ENCODE measurements at regions of chr6 and their contacts with region 1.

Region 1: DNA sequence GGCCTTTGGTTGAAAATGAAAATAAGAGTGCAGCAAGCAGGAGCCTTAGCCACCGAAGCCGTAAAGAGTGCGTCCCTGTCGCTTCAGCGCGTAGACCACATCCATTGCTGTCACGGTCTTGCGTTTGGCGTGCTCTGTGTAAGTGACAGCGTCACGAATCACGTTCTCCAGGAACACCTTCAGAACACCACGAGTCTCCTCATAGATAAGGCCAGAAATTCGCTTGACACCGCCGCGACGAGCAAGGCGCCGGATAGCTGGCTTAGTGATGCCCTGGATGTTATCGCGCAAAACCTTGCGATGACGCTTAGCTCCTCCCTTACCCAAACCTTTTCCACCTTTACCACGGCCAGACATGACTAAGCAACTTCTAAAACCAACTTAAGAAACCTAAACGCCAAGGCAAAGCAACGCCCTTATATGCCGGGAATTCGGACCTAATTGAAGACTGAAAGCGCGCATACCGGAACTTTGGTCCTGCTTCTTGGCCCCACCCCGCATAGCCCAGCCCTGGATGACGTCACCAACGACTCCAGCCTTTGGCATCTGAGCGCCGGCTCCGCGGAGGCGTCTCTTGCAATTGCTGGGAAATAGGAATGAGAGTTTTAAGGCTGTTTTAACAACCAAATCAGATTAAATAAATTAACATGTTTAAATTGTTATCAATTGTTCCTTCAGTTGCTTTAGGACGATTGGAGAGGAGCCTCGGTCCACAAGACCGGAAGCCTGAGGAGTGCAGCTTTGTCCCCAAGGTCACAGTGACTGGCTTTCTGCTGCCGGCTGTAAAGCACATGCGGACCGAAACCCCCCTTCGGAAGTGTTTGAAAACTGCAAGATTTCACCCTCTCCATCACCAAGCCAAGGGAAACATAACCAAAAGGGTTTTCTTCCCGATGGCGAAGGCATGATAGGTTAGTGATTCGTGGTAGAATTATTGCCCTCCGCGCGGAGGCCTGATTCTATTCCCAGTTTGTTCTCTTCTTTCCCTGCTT is 79.6 kb upstream of the BTN3A2 start:
- DNase-seq: peak; percentile 94 to 100
- H3K4me3 ChIP-seq: peak overlapping the region; percentile 74 to 95 (median 80)
- H3K27ac ChIP-seq: peak overlapping the region; percentile 96
- H3K4me1 ChIP-seq: peaks cover 0 to 7% (median 2%) of the 10 kb centered on the region in 4 experiments; a peak in 1 of 7 replicates
- H3K27me3 ChIP-seq: no peaks in the 10 kb centered on the region
- CTCF ChIP-seq: no peak
- EP300 ChIP-seq: peak in 1 of 2 experiments; percentile 97; a peak in 2 of 3 replicates
- POLR2A ChIP-seq: peak; percentile 100
- RAD21 ChIP-seq: no peak

Region 2: DNA sequence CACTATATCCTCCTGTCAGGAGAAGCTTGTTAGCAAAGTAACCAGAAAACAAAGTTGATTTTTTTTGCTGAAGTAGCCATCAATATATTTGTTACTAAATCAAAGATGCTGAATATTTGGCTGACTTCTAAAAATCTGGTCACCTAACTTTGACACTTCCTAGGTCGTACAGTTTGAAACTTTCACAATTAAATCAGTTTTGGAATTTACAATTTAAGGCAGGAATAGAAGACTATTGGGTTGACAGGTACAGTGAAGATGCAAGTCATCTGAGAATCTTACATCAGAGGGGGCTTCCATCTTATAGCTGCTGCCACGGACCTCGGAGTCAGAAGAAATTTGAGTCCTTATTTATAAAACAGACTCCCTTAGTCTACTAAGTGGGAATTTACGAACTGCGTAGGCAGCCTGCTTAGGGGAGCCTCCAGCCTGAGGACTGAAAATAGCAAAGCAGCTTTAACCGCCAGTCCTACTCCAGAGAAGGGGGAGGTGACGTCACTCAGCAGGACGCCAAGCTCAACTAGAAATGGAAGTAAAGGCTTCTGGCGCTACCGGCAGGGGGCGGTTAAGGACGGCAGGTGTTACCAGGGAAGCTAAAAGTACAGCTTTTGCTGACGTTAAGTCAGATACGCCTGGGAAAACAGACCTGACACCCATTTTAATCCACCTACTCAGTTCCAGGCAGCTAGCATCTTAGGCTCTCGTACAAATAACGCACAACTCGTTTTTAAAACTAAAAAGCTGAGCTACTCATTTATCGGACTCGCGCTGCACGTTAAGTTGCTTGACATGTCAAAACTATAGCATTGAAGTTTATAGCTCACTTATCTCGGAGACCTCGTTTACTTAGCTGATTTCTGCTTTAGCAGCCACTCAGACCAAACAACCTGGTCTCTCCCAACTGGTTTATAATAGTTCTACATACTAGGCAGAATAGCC is 259.3 kb before region 1 on chr6:
- CTCF ChIA-PET with region 1: no interaction called
- POLR2A ChIA-PET with region 1: interaction called, 19 read pairs
- DNase-seq: peak; percentile 90 to 93
- H3K4me3 ChIP-seq: peak overlapping the region; percentile 75 to 89 (median 82)
- H3K27ac ChIP-seq: peak overlapping the region; percentile 80
- H3K4me1 ChIP-seq: peaks cover 3 to 26% (median 10%) of the 10 kb centered on the region in 4 experiments; a peak in 5 of 7 replicates
- H3K27me3 ChIP-seq: no peaks in the 10 kb centered on the region
- CTCF ChIP-seq: peak; percentile 63 to 93 (median 77)
- EP300 ChIP-seq: peak in 1 of 2 experiments; percentile 43; a peak in 1 of 3 replicates
- POLR2A ChIP-seq: peak; percentile 85 to 91; a peak in 2 of 3 replicates
- RAD21 ChIP-seq: peak; percentile 45 to 47

Region 3: GRCh38 chr6:26196846-26197648 is 88.4 kb before region 1 on chr6:
- CTCF ChIA-PET with region 1: interaction called, 4 read pairs
- POLR2A ChIA-PET with region 1: interaction called, 197 read pairs
- DNase-seq: peak in 1 of 2 experiments; percentile 76
- H3K4me3 ChIP-seq: peak overlapping the region; percentile 85 to 98 (median 89)
- H3K27ac ChIP-seq: peak overlapping the region; percentile 82
- H3K4me1 ChIP-seq: peaks cover 0 to 1% (median 0%) of the 10 kb centered on the region in 4 experiments; a peak in 1 of 7 replicates
- H3K27me3 ChIP-seq: no peaks in the 10 kb centered on the region
- CTCF ChIP-seq: no peak
- EP300 ChIP-seq: no peak
- POLR2A ChIP-seq: peak; percentile 99
- RAD21 ChIP-seq: no peak

Region 4: DNA sequence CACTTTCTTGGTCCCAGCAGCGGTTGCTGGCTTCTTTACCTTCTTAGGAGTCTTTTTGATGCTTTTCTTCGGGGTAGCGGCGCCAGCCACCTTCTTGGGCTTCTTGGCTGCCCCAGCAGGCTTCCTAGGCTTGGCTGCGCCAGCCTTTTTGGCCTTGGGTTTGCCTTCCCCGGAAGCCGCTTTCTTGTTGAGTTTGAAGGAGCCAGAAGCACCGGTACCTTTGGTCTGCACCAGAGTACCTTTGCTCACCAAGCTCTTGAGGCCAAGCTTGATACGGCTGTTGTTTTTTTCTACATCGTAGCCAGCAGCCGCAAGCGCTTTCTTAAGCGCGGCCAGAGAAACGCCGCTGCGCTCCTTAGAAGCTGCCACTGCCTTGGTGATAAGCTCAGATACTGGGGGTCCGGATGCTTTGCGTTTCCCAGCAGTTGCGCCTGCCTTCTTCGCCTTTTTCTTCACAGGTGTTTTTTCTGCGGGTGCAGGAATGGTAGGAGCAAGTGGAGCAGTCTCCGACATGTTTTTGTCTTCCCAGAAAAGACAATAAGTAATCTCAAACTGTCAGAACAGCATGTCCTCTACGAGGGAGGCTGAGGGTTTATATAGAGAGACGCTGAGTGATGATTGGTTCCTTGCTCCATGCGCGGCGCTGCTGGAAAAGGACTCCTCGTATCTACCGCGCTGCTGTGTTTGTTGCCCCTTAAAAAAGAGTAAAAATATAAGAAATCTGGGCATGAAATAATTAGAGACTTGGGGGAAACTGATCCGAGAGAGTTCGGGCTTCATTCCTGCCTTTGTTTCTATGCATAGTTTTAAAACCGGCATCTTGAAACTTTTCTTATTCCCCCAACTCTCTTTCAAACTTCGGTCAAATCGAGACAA is 50.8 kb before region 1 on chr6:
- CTCF ChIA-PET with region 1: no interaction called
- POLR2A ChIA-PET with region 1: interaction called, 96 read pairs
- DNase-seq: peak in 1 of 2 experiments; percentile 85
- H3K4me3 ChIP-seq: peak overlapping the region; percentile 83 to 91 (median 88)
- H3K27ac ChIP-seq: peak overlapping the region; percentile 93
- H3K4me1 ChIP-seq: peaks cover 0 to 3% (median 0%) of the 10 kb centered on the region in 4 experiments; a peak in 3 of 7 replicates
- H3K27me3 ChIP-seq: no peaks in the 10 kb centered on the region
- CTCF ChIP-seq: no peak
- EP300 ChIP-seq: no peak
- POLR2A ChIP-seq: peak; percentile 86
- RAD21 ChIP-seq: no peak

Region 5: GRCh38 chr6:26304797-26305640 is 19.6 kb after region 1 on chr6:
- CTCF ChIA-PET with region 1: no interaction called
- POLR2A ChIA-PET with region 1: interaction called, 19 read pairs
- DNase-seq: peak in 1 of 2 experiments; percentile 83
- H3K4me3 ChIP-seq: peak overlapping the region; percentile 44 to 75 (median 68)
- H3K27ac ChIP-seq: no peak overlapping the region
- H3K4me1 ChIP-seq: peaks cover 0 to 3% (median 1%) of the 10 kb centered on the region in 4 experiments; a peak in 3 of 7 replicates
- H3K27me3 ChIP-seq: no peaks in the 10 kb centered on the region
- CTCF ChIP-seq: no peak
- EP300 ChIP-seq: no peak
- POLR2A ChIP-seq: no peak
- RAD21 ChIP-seq: no peak

Region 6: DNA sequence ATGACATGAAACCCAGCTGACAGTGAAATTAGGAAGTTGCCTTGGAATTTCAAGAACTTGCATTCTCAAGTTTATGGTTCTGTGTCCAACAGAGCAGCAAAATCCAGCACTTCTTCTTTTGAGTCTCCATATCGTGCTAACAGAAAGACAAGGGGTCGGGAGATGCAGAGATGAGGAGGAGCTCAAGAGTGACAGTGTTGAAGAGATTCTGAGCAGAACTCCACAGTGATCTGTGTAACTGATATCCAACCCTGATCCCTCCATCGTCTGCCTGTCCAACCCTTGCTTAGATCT is 193.5 kb after region 1 on chr6:
- CTCF ChIA-PET with region 1: no interaction called
- POLR2A ChIA-PET with region 1: no interaction called
- DNase-seq: no peak
- H3K4me3 ChIP-seq: no peak overlapping the region
- H3K27ac ChIP-seq: no peak overlapping the region
- H3K4me1 ChIP-seq: peaks cover 6 to 14% (median 10%) of the 10 kb centered on the region in 4 experiments; a peak in 5 of 7 replicates
- H3K27me3 ChIP-seq: no peaks in the 10 kb centered on the region
- CTCF ChIP-seq: no peak
- EP300 ChIP-seq: no peak
- POLR2A ChIP-seq: no peak
- RAD21 ChIP-seq: no peak

Region 7: GRCh38 chr6:26640806-26641205 is 355.4 kb after region 1 on chr6:
- CTCF ChIA-PET with region 1: no interaction called
- POLR2A ChIA-PET with region 1: no interaction called
- DNase-seq: no peak
- H3K4me3 ChIP-seq: no peak overlapping the region
- H3K27ac ChIP-seq: no peak overlapping the region
- H3K4me1 ChIP-seq: no peaks in the 10 kb centered on the region
- H3K27me3 ChIP-seq: no peaks in the 10 kb centered on the region
- CTCF ChIP-seq: no peak
- EP300 ChIP-seq: no peak
- POLR2A ChIP-seq: no peak
- RAD21 ChIP-seq: no peak

Region 8: DNA sequence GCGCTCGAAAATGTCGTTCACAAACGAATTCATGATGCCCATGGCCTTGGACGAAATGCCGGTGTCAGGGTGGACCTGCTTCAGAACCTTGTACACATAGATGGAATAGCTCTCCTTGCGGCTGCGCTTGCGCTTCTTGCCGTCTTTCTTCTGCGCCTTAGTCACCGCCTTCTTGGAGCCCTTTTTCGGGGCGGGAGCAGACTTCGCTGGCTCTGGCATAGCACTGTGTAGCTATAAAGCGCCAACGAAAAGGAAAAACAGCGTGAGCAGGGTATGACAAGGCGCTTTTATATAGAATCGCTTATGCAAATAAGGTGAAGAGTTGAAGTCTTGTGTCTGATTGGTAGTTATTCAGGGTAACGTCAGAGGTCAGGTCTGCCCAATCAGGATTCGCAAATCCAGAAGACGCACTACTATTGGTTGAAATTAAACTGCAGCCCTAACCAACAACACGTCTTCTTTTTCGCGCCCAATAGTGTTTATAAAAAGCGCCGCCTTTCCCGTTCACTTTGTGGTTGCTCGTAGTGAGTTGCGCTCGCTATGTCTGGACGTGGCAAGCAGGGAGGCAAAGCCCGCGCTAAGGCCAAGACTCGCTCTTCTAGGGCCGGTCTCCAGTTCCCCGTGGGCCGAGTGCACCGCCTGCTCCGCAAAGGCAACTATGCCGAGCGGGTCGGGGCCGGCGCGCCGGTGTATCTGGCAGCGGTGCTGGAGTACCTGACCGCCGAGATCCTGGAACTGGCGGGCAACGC is 847.3 kb after region 1 on chr6:
- CTCF ChIA-PET with region 1: no interaction called
- POLR2A ChIA-PET with region 1: interaction called, 52 read pairs
- DNase-seq: peak; percentile 95 to 98
- H3K4me3 ChIP-seq: peak overlapping the region; percentile 89 to 98 (median 90)
- H3K27ac ChIP-seq: peak overlapping the region; percentile 96
- H3K4me1 ChIP-seq: peaks cover 0 to 5% (median 0%) of the 10 kb centered on the region in 4 experiments; a peak in 2 of 7 replicates
- H3K27me3 ChIP-seq: no peaks in the 10 kb centered on the region
- CTCF ChIP-seq: no peak
- EP300 ChIP-seq: no peak
- POLR2A ChIP-seq: peak; percentile 98 to 99
- RAD21 ChIP-seq: no peak

Region 9: GRCh38 chr6:27864906-27865849 is 1579.7 kb after region 1 on chr6:
- CTCF ChIA-PET with region 1: no interaction called
- POLR2A ChIA-PET with region 1: interaction called, 10 read pairs
- DNase-seq: peak in 1 of 2 experiments; percentile 86
- H3K4me3 ChIP-seq: peak overlapping the region; percentile 61 to 86 (median 79)
- H3K27ac ChIP-seq: peak overlapping the region; percentile 90
- H3K4me1 ChIP-seq: peaks cover 0 to 5% (median 1%) of the 10 kb centered on the region in 4 experiments; a peak in 2 of 7 replicates
- H3K27me3 ChIP-seq: no peaks in the 10 kb centered on the region
- CTCF ChIP-seq: no peak
- EP300 ChIP-seq: no peak
- POLR2A ChIP-seq: peak; percentile 93 to 97
- RAD21 ChIP-seq: no peak; a peak in 1 of 4 replicates

Measured in H1 (cell line).